AG04450 (cell line): ENCODE measurements at regions of chr12 and their contacts with region 1.

Region 1: GRCh38 chr12:53352331-53353256 is 16.4 kb upstream of the SP7 start:
- DNase-seq: peak; percentile 68
- H3K4me3 ChIP-seq: no peak overlapping the region
- H3K27ac ChIP-seq: no peak overlapping the region
- H3K27me3 ChIP-seq: no peaks in the 10 kb centered on the region
- CTCF ChIP-seq: peak; percentile 88

Region 2: DNA sequence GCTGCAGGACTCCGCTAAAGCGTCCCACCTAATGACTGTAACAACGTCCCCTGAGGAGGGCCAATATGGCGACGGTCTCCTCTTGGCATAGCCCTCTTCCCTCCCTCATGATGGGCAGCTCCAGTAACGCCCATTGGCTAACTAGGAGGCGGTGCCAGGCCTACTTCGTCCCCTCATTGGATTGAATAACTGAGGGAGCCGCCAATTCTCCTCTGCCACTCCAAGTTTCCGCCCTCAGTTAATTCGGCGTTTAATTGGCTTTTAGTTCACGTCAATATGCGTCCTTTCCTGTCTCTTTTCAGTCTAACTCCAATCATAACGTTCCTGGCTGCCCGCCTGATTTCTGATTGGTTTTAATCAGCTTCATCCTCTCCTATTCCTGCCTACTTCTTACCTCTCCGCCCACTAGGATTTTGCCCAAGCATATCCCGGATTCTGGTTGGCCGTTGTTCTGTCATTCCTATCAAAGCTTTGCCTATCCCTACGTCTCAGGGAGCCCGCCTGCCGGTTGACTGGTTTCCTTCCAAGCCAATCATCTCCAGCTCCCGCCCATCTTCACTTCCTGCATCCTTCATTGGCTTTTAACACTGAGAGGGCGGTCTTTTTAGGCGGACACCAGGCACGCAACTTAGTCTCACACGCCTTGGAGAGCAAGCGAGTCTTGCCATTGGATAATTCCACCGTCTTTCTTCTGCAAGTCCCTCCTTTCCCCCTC is 27.0 kb after region 1 on chr12:
- CTCF ChIA-PET with region 1: interaction called, 24 read pairs
- POLR2A ChIA-PET with region 1: interaction called, 14 read pairs
- DNase-seq: peak; percentile 100
- H3K4me3 ChIP-seq: peak overlapping the region; percentile 68
- H3K27ac ChIP-seq: peak overlapping the region; percentile 81
- H3K27me3 ChIP-seq: no peaks in the 10 kb centered on the region
- CTCF ChIP-seq: no peak

Region 3: DNA sequence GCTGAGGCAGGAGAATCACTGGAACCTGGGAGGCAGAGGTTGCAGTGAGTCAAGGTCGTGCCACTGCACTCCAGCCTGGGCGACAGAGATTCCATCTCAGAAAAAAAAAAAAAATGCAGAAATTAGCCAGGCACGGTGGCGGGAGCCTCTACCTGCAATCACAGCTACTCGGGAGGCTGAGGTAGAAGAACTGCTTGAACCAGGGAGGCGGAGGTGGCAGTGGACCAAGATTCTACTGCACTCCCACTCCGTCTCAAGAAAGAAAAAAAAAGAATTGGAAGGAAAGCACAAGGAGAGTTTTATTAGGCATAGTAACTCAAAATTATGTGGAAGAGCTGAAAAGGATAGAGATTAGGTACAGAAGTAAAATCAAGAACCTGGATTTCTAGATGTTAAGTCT is 50.3 kb after region 1 on chr12:
- CTCF ChIA-PET with region 1: interaction called, 12 read pairs
- POLR2A ChIA-PET with region 1: no interaction called
- DNase-seq: no peak
- H3K4me3 ChIP-seq: no peak overlapping the region
- H3K27ac ChIP-seq: no peak overlapping the region
- H3K27me3 ChIP-seq: no peaks in the 10 kb centered on the region
- CTCF ChIP-seq: no peak

Region 4: DNA sequence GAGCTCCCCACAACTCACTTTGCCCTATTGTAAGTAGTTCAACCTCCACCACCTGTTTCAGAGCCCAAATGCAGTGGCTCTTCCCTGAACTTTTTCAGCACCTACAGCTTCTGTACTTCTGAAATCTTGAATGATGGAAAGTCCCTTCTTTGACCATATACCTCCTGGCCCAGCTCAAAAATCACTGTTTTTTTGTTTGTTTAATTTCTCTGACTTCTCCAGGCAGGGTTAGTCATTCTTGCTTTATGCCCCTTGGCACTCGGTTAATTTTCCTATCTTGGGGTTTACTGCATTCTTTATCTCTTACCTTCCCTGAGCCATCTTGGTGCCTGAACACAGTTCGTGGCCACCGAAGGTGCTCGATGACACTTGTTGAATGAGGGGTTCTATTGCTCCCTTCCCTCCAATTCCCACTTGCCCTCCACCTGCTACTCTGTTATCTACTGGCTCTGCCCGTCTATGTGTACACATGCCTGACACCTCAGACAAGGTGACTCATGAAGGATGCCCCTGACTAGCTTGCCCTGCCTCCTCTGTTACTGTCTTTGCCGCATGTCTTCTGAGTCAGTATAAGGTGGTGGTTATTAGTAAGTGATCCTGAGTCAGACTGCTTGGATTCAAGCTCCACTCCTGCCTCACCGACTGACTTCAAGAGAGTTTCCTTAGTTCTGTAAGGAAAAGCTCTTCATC is 75.5 kb after region 1 on chr12:
- CTCF ChIA-PET with region 1: interaction called, 325 read pairs
- POLR2A ChIA-PET with region 1: no interaction called
- DNase-seq: peak; percentile 70
- H3K4me3 ChIP-seq: no peak overlapping the region
- H3K27ac ChIP-seq: no peak overlapping the region
- H3K27me3 ChIP-seq: peaks cover 7% of the 10 kb centered on the region
- CTCF ChIP-seq: no peak

Region 5: GRCh38 chr12:53476769-53477209 is 124.2 kb after region 1 on chr12:
- CTCF ChIA-PET with region 1: interaction called, 35 read pairs
- POLR2A ChIA-PET with region 1: interaction called, 3 read pairs
- DNase-seq: no peak
- H3K4me3 ChIP-seq: no peak overlapping the region
- H3K27ac ChIP-seq: no peak overlapping the region
- H3K27me3 ChIP-seq: no peaks in the 10 kb centered on the region
- CTCF ChIP-seq: peak; percentile 47